CD8-positive, alpha-beta T cell (primary cell): ENCODE measurements at regions of chr18 and their contacts with region 1.

Region 1: GRCh38 chr18:31555971-31556747 is 35.5 kb upstream of the TTR start:
- DNase-seq: peak in 5 of 9 experiments; percentile 17 to 72 (median 32)
- ATAC-seq: no peak
- H3K4me3 ChIP-seq: no peak overlapping the region
- H3K4me3 Mint-ChIP-seq: no peak overlapping the region
- H3K27ac ChIP-seq: no peak overlapping the region
- H3K27ac Mint-ChIP-seq: no peak overlapping the region
- H3K4me1 ChIP-seq: no peaks in the 10 kb centered on the region
- H3K4me1 Mint-ChIP-seq: peaks cover 2% of the 10 kb centered on the region
- H3K27me3 ChIP-seq: no peaks in the 10 kb centered on the region
- H3K27me3 Mint-ChIP-seq: peaks cover 9% of the 10 kb centered on the region
- CTCF ChIP-seq: peak; percentile 82

Region 2: DNA sequence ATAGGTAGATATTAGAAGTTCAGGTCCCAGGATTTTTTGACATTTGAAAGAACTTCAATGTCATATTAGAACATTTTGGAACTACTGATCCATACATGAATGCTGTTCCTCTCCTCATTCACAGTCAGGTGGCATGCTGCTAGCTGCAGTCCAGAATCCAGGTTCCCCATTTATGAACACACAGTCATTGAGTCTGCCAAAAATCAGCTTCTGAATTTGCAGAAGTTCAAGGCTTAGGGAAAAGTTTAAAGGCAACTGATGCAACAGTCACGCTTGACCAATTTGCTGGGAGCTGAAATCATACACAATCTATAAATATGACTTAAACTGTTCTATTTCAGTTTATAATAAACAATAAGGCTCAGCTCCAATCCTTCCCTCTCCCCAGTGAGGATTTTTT is 18.2 kb after region 1 on chr18:
- CTCF ChIA-PET with region 1: interaction called, 13 read pairs
- POLR2A ChIA-PET with region 1: no interaction called
- intact Hi-C with region 1: no loop called
- DNase-seq: no peak
- ATAC-seq: no peak
- H3K4me3 ChIP-seq: no peak overlapping the region
- H3K4me3 Mint-ChIP-seq: no peak overlapping the region
- H3K27ac ChIP-seq: no peak overlapping the region
- H3K27ac Mint-ChIP-seq: no peak overlapping the region
- H3K4me1 ChIP-seq: no peaks in the 10 kb centered on the region
- H3K4me1 Mint-ChIP-seq: no peaks in the 10 kb centered on the region
- H3K27me3 ChIP-seq: no peaks in the 10 kb centered on the region
- H3K27me3 Mint-ChIP-seq: no peaks in the 10 kb centered on the region
- CTCF ChIP-seq: no peak

Region 3: GRCh38 chr18:31819106-31819924 is 263.2 kb after region 1 on chr18:
- CTCF ChIA-PET with region 1: interaction called, 5 read pairs
- POLR2A ChIA-PET with region 1: no interaction called
- intact Hi-C with region 1: loop called (anchors 5 kb)
- DNase-seq: peak in 2 of 9 experiments; percentile 33 to 46
- ATAC-seq: peak; percentile 42
- H3K4me3 ChIP-seq: no peak overlapping the region
- H3K4me3 Mint-ChIP-seq: no peak overlapping the region
- H3K27ac ChIP-seq: no peak overlapping the region
- H3K27ac Mint-ChIP-seq: no peak overlapping the region
- H3K4me1 ChIP-seq: no peaks in the 10 kb centered on the region
- H3K4me1 Mint-ChIP-seq: no peaks in the 10 kb centered on the region
- H3K27me3 ChIP-seq: no peaks in the 10 kb centered on the region
- H3K27me3 Mint-ChIP-seq: no peaks in the 10 kb centered on the region
- CTCF ChIP-seq: peak; percentile 61

Region 4: DNA sequence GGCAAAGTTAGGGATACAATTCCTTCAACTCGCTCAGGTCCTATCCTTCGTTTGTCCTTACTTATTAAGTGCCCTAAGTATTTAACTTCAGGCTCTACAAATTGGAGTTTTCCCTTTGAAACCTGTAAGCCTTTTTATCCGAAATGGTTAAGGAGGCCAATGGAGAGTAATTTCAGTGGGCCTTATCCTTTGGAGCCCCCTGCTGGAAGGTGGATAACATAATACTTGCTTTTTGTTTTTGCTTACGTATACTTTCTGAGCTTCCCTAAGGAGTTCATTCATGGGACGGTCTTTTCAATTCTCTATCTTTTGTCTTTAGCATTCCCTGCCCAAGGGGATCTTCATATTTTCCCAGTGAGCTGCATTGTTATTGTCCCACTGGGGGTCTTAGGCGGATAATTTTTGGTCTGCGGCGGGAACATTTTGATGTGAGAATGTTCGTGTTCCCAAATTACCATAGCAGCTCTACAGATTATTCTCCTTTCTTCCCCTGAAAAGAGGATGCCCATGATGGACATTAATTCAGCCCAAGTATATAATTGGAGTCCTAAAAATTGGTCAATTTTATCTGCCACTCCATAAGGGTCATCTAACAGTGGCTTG is 421.2 kb after region 1 on chr18:
- CTCF ChIA-PET with region 1: no interaction called
- POLR2A ChIA-PET with region 1: no interaction called
- intact Hi-C with region 1: loop called (anchors 5 kb)
- DNase-seq: peak in 5 of 9 experiments; percentile 15 to 65 (median 41)
- ATAC-seq: no peak
- H3K4me3 ChIP-seq: no peak overlapping the region
- H3K4me3 Mint-ChIP-seq: no peak overlapping the region
- H3K27ac ChIP-seq: no peak overlapping the region
- H3K27ac Mint-ChIP-seq: no peak overlapping the region
- H3K4me1 ChIP-seq: no peaks in the 10 kb centered on the region
- H3K4me1 Mint-ChIP-seq: peaks cover 1% of the 10 kb centered on the region
- H3K27me3 ChIP-seq: no peaks in the 10 kb centered on the region
- H3K27me3 Mint-ChIP-seq: no peaks in the 10 kb centered on the region
- CTCF ChIP-seq: peak; percentile 62

Region 5: GRCh38 chr18:32552421-32553030 is 996.4 kb after region 1 on chr18:
- CTCF ChIA-PET with region 1: no interaction called
- POLR2A ChIA-PET with region 1: no interaction called
- intact Hi-C with region 1: loop called in 1 of 2 experiments (anchors 2 kb)
- DNase-seq: peak; percentile 3 to 77 (median 55)
- ATAC-seq: peak; percentile 69
- H3K4me3 ChIP-seq: no peak overlapping the region
- H3K4me3 Mint-ChIP-seq: no peak overlapping the region
- H3K27ac ChIP-seq: no peak overlapping the region
- H3K27ac Mint-ChIP-seq: no peak overlapping the region
- H3K4me1 ChIP-seq: no peaks in the 10 kb centered on the region
- H3K4me1 Mint-ChIP-seq: peaks cover 2% of the 10 kb centered on the region
- H3K27me3 ChIP-seq: no peaks in the 10 kb centered on the region
- H3K27me3 Mint-ChIP-seq: peaks cover 16% of the 10 kb centered on the region
- CTCF ChIP-seq: peak; percentile 77